Activated CD4-positive, alpha-beta T cell treated with anti-CD3 and anti-CD28 coated beads, Interleukin-2, amount 10 ng/mL, durations not matched to agents 24 days and 14 days (primary cell): ENCODE measurements at regions of chr1 and their contacts with region 1.

Region 1: GRCh38 chr1:209674957-209675564 is at the start of gene G0S2:
- DNase-seq: peak; percentile 82
- H3K4me3 Mint-ChIP-seq: peak within 1 kb of the TSS; percentile 89
- H3K27ac Mint-ChIP-seq: peak within 1 kb of the TSS; percentile 79
- H3K4me1 Mint-ChIP-seq: peaks cover 75% of the 10 kb centered on the region
- H3K27me3 Mint-ChIP-seq: peaks cover 6% of the 10 kb centered on the region
- total RNA-seq, gene G0S2: 449 and 477 TPM in 2 replicates

Region 2: GRCh38 chr1:209607102-209607794 is 67.8 kb before region 1 on chr1:
- intact Hi-C with region 1: loop called (anchors 5 kb)
- DNase-seq: peak; percentile 71
- H3K4me3 Mint-ChIP-seq: peak overlapping the region; percentile 17
- H3K27ac Mint-ChIP-seq: peak overlapping the region; percentile 45
- H3K4me1 Mint-ChIP-seq: peaks cover 10% of the 10 kb centered on the region
- H3K27me3 Mint-ChIP-seq: no peaks in the 10 kb centered on the region

Region 3: GRCh38 chr1:209659909-209660308 is 15.2 kb before region 1 on chr1:
- intact Hi-C with region 1: loop called (anchors 1 kb)
- DNase-seq: peak; percentile 70
- H3K4me3 Mint-ChIP-seq: peak overlapping the region; percentile 17
- H3K27ac Mint-ChIP-seq: peak overlapping the region; percentile 83
- H3K4me1 Mint-ChIP-seq: peaks cover 30% of the 10 kb centered on the region
- H3K27me3 Mint-ChIP-seq: no peaks in the 10 kb centered on the region

Region 4: DNA sequence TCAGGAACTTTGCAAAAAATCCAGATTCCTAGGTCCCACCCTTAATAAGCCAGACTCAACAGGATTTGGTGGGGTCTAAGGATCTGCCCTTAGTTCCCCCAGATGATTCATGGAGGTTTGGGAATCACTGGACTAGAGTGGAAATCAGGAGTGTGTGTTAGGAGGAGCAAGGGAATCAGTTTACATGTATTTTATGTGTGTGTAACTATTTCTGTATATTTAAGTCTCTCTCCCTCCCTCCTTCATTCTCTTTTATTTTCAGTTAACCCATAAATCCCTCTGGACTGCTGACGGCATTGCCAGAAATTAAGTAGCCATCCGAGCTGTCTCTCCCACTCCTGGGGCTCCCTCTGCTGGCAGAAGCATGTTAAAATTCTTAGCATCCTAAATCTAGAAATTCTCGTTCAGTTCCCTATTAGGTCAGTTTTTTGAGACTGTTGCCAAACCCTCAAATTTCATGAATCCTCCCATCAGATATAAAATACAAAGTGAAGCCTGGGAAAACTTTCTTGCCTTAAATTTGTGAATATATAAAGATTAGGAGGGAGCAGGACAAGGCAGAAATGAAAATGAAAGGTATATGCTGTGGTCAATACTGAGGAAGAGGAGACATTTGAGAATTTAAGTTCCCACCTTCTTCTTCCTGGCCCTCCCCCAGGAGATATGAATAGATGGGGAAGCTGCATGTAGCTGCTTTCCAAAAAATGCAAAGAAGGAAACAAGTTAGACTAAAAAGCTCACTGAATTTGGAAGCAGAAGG is 17.9 kb after region 1 on chr1:
- intact Hi-C with region 1: loop called (anchors 1 kb)
- DNase-seq: peak; percentile 92
- H3K4me3 Mint-ChIP-seq: peak overlapping the region; percentile 37
- H3K27ac Mint-ChIP-seq: peak overlapping the region; percentile 57
- H3K4me1 Mint-ChIP-seq: peaks cover 62% of the 10 kb centered on the region
- H3K27me3 Mint-ChIP-seq: no peaks in the 10 kb centered on the region

Region 5: GRCh38 chr1:209723756-209724693 is 49.0 kb after region 1 on chr1:
- intact Hi-C with region 1: loop called (anchors 1 kb)
- DNase-seq: peak; percentile 83
- H3K4me3 Mint-ChIP-seq: peak overlapping the region; percentile 47
- H3K27ac Mint-ChIP-seq: peak overlapping the region; percentile 100
- H3K4me1 Mint-ChIP-seq: peaks cover 55% of the 10 kb centered on the region
- H3K27me3 Mint-ChIP-seq: no peaks in the 10 kb centered on the region

Region 6: DNA sequence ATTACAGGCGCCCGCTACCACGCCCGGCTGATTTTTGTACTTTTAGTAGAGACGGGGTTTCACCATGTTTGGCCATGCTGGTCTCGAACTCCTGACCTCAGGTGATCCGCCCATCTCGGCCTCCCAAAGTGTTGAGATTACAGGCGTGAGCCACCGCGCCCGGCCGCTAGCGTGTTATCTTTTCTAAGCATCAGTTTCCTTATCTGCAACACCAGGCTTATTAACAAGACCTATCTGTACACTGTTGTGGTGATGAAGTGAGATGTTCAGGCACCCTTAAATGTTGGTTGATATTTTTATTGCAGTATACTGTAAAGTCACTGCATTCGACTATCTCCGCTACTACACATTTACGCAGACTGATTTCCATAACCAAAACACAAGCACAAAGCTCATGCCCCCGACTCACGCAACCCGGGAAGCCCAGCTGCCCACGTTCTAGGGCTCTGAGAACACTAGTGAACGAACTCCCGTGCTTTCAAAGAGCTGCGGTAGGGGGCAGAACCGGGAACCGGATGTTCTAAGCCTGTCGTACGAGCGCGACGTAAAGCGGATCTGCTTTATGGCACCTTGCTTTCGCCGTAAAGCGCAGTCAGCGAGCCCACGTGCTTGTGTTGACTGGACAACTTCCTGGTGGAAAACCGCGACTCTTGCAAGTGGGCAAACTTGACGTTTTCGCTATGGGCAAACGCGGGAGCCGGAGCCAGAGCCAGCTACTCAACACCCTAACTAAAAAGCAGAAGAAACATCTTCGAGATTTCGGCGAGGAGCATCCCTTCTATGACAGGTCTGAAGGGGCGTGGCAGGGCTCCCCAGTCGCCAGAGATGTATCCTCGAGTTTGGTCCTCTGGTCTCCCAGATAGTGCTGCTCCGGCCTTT is 152.6 kb after region 1 on chr1 and contains the start of gene UTP25:
- intact Hi-C with region 1: loop called (anchors 5 kb)
- DNase-seq: peak; percentile 98
- H3K4me3 Mint-ChIP-seq: peak within 1 kb of the TSS; percentile 93
- H3K27ac Mint-ChIP-seq: peak within 1 kb of the TSS; percentile 86
- H3K4me1 Mint-ChIP-seq: peaks cover 43% of the 10 kb centered on the region
- H3K27me3 Mint-ChIP-seq: peaks cover 4% of the 10 kb centered on the region
- total RNA-seq, gene UTP25: 17.2 and 17.6 TPM in 2 replicates